Activated T-helper 2 cell treated with anti-CD3 and anti-CD28 coated beads, Interferon-gamma antibody, Interleukin-2, Interleukin-4, amounts not matched to agents 10 μg/mL and 5 μg/mL and 100 μg/mL, durations not matched to agents 14 hours and 24 hours and 36 hours (primary cell): ENCODE measurements at regions of chr1 and their contacts with region 1.

Region 1: GRCh38 chr1:217630711-217631591 is at the starts of genes GPATCH2 and SPATA17:
- DNase-seq: peak; percentile 76
- H3K4me3 Mint-ChIP-seq: peak within 1 kb of the TSS; percentile 96
- H3K27ac Mint-ChIP-seq: peak within 1 kb of the TSS; percentile 98
- H3K4me1 Mint-ChIP-seq: peaks cover 30% of the 10 kb centered on the region
- H3K27me3 Mint-ChIP-seq: peaks cover 4% of the 10 kb centered on the region
- total RNA-seq, gene GPATCH2: 8.9 and 10.7 TPM in 2 replicates
- total RNA-seq, gene SPATA17: not detected in 2 replicates

Region 2: DNA sequence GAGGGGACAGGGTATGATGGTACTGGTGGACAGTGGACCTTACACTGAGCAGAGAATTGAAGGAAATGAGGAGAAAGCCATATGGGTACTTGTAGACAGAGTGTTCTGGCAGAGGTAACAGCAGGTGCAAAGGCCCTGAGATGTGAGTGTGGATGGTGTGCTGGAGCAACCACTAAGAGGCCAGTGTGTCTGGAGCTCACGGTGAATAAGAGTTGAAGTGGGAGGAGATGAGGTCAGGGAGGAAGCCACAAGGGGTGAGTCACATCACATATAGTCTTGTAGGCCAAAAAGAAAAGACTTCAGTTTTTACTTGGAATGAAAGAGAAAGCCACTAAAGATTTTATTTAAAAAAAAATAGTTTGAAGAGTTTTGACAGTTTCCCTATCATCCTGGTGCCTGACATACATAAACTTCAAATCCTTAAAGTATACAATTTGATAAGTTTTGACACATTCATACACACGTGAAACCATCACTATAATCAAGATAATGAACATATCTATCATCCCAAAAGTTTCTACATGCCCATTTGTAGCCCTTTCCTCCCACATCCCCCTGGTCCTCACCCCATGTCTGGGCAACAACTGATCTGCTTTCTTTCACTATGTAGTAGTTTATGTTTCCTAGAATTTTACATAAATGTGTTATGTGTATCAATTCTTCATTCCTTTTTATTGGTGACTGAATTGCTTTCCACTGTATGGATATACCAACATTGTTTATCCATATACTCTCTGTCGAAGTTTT is 148.4 kb before region 1 on chr1:
- intact Hi-C with region 1: loop called (anchors 2 kb)
- DNase-seq: peak; percentile 38
- H3K4me3 Mint-ChIP-seq: no peak overlapping the region
- H3K27ac Mint-ChIP-seq: peak overlapping the region; percentile 59
- H3K4me1 Mint-ChIP-seq: peaks cover 29% of the 10 kb centered on the region
- H3K27me3 Mint-ChIP-seq: no peaks in the 10 kb centered on the region

Region 3: GRCh38 chr1:217620814-217621213 is 10.1 kb before region 1 on chr1:
- intact Hi-C with region 1: loop called (anchors 1 kb)
- DNase-seq: no peak
- H3K4me3 Mint-ChIP-seq: no peak overlapping the region
- H3K27ac Mint-ChIP-seq: peak overlapping the region; percentile 25
- H3K4me1 Mint-ChIP-seq: peaks cover 23% of the 10 kb centered on the region
- H3K27me3 Mint-ChIP-seq: no peaks in the 10 kb centered on the region

Region 4: GRCh38 chr1:217660353-217661062 is 29.6 kb after region 1 on chr1:
- intact Hi-C with region 1: no loop called
- DNase-seq: no peak
- H3K4me3 Mint-ChIP-seq: no peak overlapping the region
- H3K27ac Mint-ChIP-seq: no peak overlapping the region
- H3K4me1 Mint-ChIP-seq: no peaks in the 10 kb centered on the region
- H3K27me3 Mint-ChIP-seq: peaks cover 2% of the 10 kb centered on the region